Mammary epithelial cell (primary cell): ENCODE measurements at regions of chr2 and their contacts with region 1.

Region 1: DNA sequence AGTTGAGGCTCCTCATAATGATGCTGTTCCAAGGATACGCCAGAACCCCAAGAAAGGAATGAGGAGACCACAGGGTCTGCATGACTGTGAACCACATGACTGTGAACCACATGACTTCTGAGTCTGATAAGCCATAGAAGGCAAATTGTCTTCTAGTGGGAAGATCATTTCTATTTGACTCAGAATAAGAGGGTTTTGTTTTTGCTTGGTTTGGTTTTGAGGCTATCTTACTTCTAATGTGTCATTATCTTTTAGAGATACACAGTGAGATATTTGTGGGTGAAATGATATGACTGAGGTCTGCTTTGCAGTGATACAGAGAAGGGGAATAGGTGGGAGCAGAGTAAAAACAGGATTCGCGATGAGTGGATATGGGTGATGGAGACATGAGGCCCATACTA is 28.9 kb upstream of the BCL2L11 start:
- DNase-seq: no peak
- H3K4me3 ChIP-seq: no peak overlapping the region
- H3K27ac ChIP-seq: no peak overlapping the region
- H3K4me1 ChIP-seq: no peaks in the 10 kb centered on the region
- H3K27me3 ChIP-seq: peaks cover 10% of the 10 kb centered on the region
- CTCF ChIP-seq: no peak

Region 2: DNA sequence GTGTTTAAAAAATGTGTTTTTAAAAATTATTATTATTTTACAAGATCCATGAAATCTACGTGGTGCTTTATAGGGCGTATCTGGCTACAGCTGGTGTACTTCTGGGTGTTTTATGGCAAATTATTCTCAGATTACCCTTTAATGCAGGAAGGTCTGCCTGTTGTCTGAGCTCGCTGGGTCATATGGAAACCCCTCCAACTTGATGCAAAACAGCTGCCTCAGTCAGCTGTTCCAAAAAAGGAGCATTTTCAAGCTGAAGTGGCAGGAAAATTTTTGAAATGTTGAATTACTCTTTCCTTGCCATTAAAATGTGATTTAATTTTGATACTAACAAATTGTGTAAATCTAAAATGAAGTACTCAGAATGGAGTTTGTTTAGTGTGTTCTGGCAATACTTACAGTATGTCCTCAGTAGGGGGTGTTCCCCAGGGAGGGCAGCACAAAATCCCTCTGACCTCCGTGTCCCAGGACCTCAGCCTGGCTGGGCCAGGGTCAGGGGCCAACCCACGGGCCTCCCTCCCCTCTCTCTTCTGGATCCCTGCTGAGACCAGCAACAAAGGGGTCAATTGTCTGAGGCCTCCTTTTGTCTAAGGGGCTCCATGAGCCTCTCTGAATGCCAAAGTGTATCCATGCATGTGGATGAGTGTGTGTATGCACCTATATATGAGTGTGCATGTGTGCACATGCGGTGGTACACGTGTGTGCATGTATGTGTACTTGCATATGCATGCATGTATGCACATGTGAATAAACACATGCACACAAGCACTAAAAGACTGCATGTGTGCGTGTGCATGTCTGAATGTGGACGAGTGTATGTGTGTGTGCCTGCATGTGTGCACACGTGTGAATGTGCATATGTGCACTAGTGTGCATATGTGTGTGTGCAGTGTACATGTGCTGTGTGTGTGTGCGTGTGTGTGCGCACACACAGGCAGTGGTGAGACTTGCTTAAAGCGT is 254.1 kb before region 1 on chr2:
- CTCF ChIA-PET with region 1: no interaction called
- dilution Hi-C with region 1: no loop called
- in situ Hi-C with region 1: loop called in 1 of 2 experiments (anchors 25 kb)
- intact Hi-C with region 1: no loop called
- DNase-seq: no peak
- H3K4me3 ChIP-seq: no peak overlapping the region
- H3K27ac ChIP-seq: no peak overlapping the region
- H3K4me1 ChIP-seq: peaks cover 4% of the 10 kb centered on the region
- H3K27me3 ChIP-seq: no peaks in the 10 kb centered on the region
- CTCF ChIP-seq: no peak

Region 3: DNA sequence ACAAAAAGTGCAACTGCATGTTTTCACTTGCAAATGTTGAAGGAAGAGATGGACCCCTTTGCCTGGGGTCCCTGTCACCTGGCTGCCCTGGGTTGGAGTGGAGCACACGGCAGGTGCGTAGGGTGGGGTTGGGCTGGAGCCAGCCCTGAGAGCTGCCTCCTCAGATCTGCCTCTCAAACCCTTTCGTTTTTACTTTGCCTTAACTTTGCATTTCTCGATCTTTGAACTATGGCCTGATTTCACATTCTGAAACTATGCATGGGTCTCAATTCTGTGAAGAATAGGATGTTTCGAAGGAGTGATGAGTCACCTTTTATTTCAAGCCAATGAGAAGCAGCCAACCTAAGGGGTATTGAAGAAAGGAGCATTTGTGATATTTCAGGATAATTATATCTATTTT is 226.6 kb before region 1 on chr2:
- CTCF ChIA-PET with region 1: no interaction called
- dilution Hi-C with region 1: loop called (anchors 10 kb)
- in situ Hi-C with region 1: no loop called
- intact Hi-C with region 1: no loop called
- DNase-seq: no peak
- H3K4me3 ChIP-seq: no peak overlapping the region
- H3K27ac ChIP-seq: no peak overlapping the region
- H3K4me1 ChIP-seq: peaks cover 6% of the 10 kb centered on the region
- H3K27me3 ChIP-seq: no peaks in the 10 kb centered on the region
- CTCF ChIP-seq: no peak

Region 4: DNA sequence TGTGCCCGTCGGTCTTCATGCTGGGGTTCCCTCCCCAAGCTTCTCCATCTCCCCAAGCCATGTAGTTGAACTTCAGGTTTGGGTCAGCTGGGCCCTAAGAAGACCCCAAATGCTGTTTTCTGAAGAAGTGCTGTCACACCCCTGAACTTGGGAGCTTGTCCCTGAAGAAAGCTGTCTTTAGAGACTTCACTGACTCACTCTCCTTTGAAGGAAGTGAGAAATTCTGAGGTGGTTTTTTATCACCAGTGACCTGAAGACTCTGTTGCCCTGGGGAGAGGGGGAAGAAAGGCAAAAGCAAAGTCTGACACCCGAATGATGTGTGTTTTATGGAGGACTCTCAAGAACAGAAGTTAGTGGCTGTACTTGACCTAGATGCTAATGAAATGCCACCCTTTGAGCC is 54.7 kb before region 1 on chr2:
- CTCF ChIA-PET with region 1: no interaction called
- dilution Hi-C with region 1: loop called (anchors 5 kb)
- in situ Hi-C with region 1: no loop called
- intact Hi-C with region 1: no loop called
- DNase-seq: peak; percentile 12
- H3K4me3 ChIP-seq: no peak overlapping the region
- H3K27ac ChIP-seq: no peak overlapping the region
- H3K4me1 ChIP-seq: peaks cover 13% of the 10 kb centered on the region
- H3K27me3 ChIP-seq: no peaks in the 10 kb centered on the region
- CTCF ChIP-seq: no peak

Region 5: GRCh38 chr2:111157798-111158197 is 66.0 kb after region 1 on chr2:
- CTCF ChIA-PET with region 1: no interaction called
- dilution Hi-C with region 1: no loop called
- in situ Hi-C with region 1: no loop called
- intact Hi-C with region 1: no loop called
- DNase-seq: no peak
- H3K4me3 ChIP-seq: no peak overlapping the region
- H3K27ac ChIP-seq: no peak overlapping the region
- H3K4me1 ChIP-seq: peaks cover 51% of the 10 kb centered on the region
- H3K27me3 ChIP-seq: no peaks in the 10 kb centered on the region
- CTCF ChIP-seq: no peak